Activated CD4-positive, alpha-beta memory T cell treated with anti-CD3 and anti-CD28 coated beads for 36 hours (primary cell): ENCODE measurements at regions of chr2 and their contacts with region 1.

Region 1: DNA sequence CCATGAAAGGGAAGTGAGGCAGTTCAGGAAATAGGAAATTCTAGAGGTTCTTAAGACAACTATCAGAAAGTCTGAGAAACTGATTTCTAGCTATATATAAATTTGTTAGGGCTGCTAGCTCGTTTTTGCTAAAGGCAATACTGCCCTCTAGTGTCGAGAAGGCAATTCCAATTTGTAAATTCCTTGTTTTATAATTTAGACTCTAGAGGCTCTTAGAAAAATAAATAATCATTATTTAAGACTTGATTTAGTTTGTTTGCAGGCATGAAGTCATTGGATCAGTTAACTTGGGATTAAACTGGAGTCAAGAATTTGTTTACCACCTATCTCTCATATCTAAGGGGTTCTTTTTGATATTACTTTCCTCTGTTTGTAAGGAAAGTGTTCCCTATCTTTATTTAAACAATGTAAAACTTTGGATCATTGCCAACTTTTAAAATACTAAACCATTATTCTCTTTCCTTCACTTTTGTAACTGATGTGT is 66.2 kb downstream of the ACVR2A start:
- DNase-seq: peak; percentile 15
- H3K4me3 Mint-ChIP-seq: no peak overlapping the region
- H3K27ac Mint-ChIP-seq: no peak overlapping the region
- H3K4me1 Mint-ChIP-seq: peaks cover 5% of the 10 kb centered on the region
- H3K27me3 Mint-ChIP-seq: no peaks in the 10 kb centered on the region

Region 2: GRCh38 chr2:146734042-146734820 is 1176.8 kb before region 1 on chr2:
- CTCF ChIA-PET with region 1: interaction called, 3 read pairs
- POLR2A ChIA-PET with region 1: no interaction called
- intact Hi-C with region 1: loop called (anchors 1 kb)
- DNase-seq: no peak
- H3K4me3 Mint-ChIP-seq: no peak overlapping the region
- H3K27ac Mint-ChIP-seq: no peak overlapping the region
- H3K4me1 Mint-ChIP-seq: no peaks in the 10 kb centered on the region
- H3K27me3 Mint-ChIP-seq: no peaks in the 10 kb centered on the region

Region 3: GRCh38 chr2:147045113-147045512 is 865.9 kb before region 1 on chr2:
- CTCF ChIA-PET with region 1: interaction called, 106 read pairs
- POLR2A ChIA-PET with region 1: no interaction called
- intact Hi-C with region 1: loop called (anchors 1 kb)
- DNase-seq: peak; percentile 67
- H3K4me3 Mint-ChIP-seq: no peak overlapping the region
- H3K27ac Mint-ChIP-seq: no peak overlapping the region
- H3K4me1 Mint-ChIP-seq: peaks cover 3% of the 10 kb centered on the region
- H3K27me3 Mint-ChIP-seq: no peaks in the 10 kb centered on the region

Region 4: GRCh38 chr2:147288131-147288530 is 622.9 kb before region 1 on chr2:
- CTCF ChIA-PET with region 1: interaction called, 5 read pairs
- POLR2A ChIA-PET with region 1: no interaction called
- intact Hi-C with region 1: loop called (anchors 1 kb)
- DNase-seq: peak; percentile 41
- H3K4me3 Mint-ChIP-seq: no peak overlapping the region
- H3K27ac Mint-ChIP-seq: peak overlapping the region; percentile 59
- H3K4me1 Mint-ChIP-seq: peaks cover 45% of the 10 kb centered on the region
- H3K27me3 Mint-ChIP-seq: no peaks in the 10 kb centered on the region

Region 5: DNA sequence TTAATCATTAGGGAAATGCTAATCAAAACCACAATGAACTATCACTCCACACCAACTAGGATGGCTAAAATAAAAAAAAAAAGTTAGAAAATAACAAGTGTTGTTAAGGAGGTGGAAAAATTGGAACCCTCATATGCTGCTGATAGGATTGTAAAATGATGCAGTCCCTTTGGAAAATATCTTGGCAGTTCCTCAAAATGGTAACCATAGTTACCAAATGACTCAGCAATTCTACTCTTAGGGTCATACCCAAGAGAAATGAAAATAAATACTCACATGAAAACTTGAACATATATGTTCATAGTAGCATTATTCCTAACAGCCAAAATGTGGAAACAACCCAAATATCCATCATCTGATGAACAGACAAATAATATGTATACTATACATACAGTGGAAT is 81.9 kb before region 1 on chr2:
- CTCF ChIA-PET with region 1: no interaction called
- POLR2A ChIA-PET with region 1: no interaction called
- intact Hi-C with region 1: no loop called
- DNase-seq: no peak
- H3K4me3 Mint-ChIP-seq: no peak overlapping the region
- H3K27ac Mint-ChIP-seq: no peak overlapping the region
- H3K4me1 Mint-ChIP-seq: no peaks in the 10 kb centered on the region
- H3K27me3 Mint-ChIP-seq: no peaks in the 10 kb centered on the region

Region 6: DNA sequence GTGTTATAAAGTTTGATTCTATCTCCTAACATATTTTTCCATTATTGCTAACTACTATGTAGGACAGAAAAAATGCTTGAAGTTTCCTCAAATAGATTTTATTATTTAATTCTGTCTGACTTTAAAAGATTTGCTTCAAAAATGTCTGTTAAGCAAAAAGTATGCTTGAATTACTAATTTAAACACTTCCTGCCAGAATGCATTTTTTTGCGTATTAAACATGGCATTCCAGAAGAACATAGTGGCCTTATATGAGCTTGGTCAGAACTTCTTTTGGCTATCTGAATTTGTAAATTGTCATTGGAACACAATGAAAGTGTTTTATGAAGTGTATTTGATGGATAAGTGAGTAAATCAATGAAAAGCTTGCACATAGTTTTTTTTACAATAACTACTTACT is 147.6 kb after region 1 on chr2:
- CTCF ChIA-PET with region 1: no interaction called
- POLR2A ChIA-PET with region 1: no interaction called
- intact Hi-C with region 1: no loop called
- DNase-seq: no peak
- H3K4me3 Mint-ChIP-seq: no peak overlapping the region
- H3K27ac Mint-ChIP-seq: no peak overlapping the region
- H3K4me1 Mint-ChIP-seq: no peaks in the 10 kb centered on the region
- H3K27me3 Mint-ChIP-seq: no peaks in the 10 kb centered on the region